Left ventricle myocardium inferior (tissue), 1 donor: ENCODE measurements at regions of chr12 and their contacts with region 1.

Region 1: DNA sequence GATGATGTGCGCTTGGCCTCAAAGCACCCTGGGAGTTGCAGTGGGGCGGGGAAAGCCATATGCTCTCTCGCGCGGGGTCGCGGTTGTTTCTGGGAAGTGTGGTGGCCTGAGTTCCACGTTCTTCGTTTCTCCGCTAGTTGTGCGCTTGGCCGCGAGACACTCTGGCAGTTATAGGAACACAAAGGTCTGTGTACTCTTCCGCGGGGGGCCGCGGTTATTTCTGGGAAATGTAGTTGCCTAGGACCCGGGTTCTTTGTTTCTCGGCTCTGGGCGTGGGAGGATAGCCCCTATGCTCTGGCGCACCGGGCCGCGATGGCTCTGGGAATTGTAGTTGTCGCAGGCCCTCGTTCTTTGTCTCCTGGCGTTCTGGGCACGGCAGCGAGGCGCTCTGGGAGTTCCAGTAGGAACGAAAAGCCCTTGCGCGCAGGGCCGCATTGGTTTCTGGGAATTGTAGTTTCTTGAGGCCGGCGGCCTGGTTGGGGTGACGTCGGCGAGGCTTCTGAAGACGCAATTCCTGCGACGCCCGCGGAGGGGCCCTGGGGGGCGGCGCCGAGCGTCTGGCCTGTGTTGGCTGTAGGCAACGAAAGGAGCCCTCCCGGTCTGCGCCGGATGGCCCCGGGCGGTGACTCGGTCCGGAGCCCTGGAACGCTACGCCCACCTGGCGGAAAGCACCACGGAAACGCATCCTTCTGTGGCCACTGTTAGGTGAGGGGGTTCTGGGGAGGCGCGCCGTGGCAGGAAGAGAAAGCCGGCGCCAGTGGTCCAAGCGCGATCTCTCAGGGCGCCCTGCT is at the start of gene ZNF140:
- DNase-seq: peak; percentile 96
- H3K4me3 ChIP-seq: peak within 1 kb of the TSS; percentile 76
- H3K27ac ChIP-seq: peak within 1 kb of the TSS; percentile 95
- H3K4me1 ChIP-seq: peaks cover 28% of the 10 kb centered on the region
- H3K27me3 ChIP-seq: no peaks in the 10 kb centered on the region
- CTCF ChIP-seq: peak; percentile 53
- total RNA-seq, gene ZNF140: 6.7 TPM

Region 2: DNA sequence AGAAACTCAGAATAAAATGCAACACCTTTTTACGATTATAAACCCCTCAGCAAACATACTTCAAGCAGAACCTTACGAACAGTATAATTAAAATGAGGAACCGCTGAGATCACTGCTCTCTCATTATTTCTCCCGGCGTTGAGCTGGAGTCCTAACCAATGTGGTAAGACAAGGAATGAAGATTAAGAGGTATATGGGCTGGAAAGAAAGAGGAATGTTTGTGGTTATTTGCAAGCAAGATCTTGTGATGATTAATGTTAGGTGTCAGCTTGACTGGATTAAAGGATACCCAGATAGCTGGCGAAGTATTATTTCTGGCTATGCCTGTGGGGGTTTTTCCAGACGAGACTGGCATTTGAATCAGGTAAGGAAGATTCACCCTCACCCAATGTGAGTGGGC is 53.6 kb before region 1 on chr12:
- intact Hi-C with region 1: no loop called
- DNase-seq: no peak
- H3K4me3 ChIP-seq: no peak overlapping the region
- H3K27ac ChIP-seq: no peak overlapping the region
- H3K4me1 ChIP-seq: no peaks in the 10 kb centered on the region
- H3K27me3 ChIP-seq: no peaks in the 10 kb centered on the region
- CTCF ChIP-seq: no peak

Region 3: DNA sequence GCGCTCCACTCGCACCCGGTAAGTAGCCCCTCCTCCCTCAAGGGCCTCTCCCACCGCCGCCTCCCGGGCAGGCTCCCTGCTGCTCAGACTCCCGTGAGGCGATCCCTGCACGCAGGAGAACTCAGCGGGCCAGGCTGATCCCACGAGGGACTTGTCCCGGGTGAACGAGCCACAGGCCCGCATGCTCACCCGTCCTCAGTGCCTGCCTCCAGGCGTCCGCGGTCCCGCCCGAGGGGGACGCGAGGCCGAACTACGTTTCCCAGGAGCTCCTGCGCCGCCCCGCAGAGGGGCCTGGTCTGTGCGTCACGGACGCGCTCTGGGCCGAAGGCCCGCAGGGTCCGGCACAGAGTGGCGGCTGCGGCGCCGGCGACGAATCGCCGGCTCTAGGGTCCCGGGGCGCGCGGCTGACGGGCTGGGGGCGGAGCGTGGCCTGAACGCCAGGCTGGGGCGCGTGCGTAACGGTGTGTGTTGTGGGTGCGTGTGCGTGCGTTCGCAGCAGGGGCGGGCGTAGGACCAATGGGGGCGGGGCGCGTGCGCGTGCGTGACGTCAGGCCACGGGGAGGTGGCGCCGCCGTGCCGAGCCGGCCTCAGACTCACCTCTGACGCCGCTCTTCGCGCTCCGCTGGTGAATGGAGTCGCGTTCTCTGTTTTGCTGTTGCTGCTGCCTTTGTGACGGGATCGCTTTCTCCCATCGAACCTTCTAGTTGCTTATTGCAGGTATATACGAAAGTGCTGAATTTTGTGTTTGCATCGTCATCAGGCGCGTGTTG is 49.7 kb after region 1 on chr12 and contains the starts of genes ZNF10 and ZNF891:
- intact Hi-C with region 1: loop called (anchors 2 kb)
- DNase-seq: peak; percentile 97
- H3K4me3 ChIP-seq: peak within 1 kb of the TSS; percentile 94
- H3K27ac ChIP-seq: peak within 1 kb of the TSS; percentile 98
- H3K4me1 ChIP-seq: peaks cover 33% of the 10 kb centered on the region
- H3K27me3 ChIP-seq: no peaks in the 10 kb centered on the region
- CTCF ChIP-seq: no peak
- total RNA-seq, gene ZNF10: 5.6 TPM
- total RNA-seq, gene ZNF891: 1.1 TPM

Region 4: DNA sequence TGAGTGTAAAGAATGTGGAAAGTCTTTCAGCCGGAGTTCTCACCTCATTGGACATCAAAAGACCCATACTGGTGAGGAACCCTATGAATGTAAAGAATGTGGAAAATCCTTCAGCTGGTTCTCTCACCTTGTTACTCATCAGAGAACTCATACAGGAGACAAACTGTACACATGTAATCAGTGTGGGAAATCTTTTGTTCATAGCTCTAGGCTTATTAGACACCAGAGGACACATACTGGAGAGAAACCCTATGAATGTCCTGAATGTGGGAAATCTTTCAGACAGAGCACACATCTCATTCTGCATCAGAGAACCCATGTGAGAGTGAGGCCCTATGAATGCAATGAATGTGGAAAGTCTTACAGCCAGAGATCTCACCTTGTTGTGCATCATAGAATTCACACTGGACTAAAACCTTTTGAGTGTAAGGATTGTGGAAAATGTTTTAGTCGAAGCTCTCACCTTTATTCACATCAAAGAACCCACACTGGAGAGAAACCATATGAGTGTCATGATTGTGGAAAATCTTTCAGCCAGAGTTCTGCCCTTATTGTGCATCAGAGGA is 75.6 kb after region 1 on chr12:
- intact Hi-C with region 1: no loop called
- DNase-seq: no peak
- H3K4me3 ChIP-seq: no peak overlapping the region
- H3K27ac ChIP-seq: no peak overlapping the region
- H3K4me1 ChIP-seq: no peaks in the 10 kb centered on the region
- H3K27me3 ChIP-seq: no peaks in the 10 kb centered on the region
- CTCF ChIP-seq: no peak